ENCODE measurements at regions of chr3 and their contacts with region 1.

Region 1: DNA sequence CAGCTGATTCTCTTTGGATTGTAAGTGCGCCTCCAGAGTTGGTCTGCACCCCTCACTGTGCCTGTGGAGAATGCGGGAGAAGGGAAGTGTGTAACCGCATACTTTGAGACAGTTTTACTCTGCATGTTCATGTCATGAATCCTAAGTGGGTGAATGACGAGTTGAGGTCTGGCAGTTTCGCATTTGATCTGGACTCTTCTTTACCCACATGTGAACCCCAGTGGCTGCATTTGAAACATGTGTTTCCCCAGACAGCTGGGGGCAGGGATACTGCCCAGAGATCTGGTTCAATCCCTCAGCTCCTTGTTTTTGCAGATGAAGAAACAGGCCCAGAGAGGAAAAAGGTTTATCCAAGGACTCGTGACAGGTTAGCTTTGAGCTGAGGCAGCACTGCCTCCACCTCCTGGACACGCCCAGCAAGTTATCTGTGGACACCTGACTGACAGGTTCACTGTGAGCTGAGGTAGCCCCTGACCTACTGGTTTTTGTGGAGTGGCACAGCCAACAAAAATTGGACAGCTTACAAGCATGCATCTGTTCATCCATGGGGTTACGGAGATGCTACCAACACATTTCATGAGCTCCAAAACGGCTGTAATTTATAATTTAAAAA is 207.3 kb downstream of the XXYLT1 start:
- DNase-seq: no peak
- ATAC-seq: no peak

Region 2: GRCh38 chr3:195080571-195081151 is 17.0 kb after region 1 on chr3:
- intact Hi-C with region 1: loop called (anchors 2 kb)
- DNase-seq: no peak
- ATAC-seq: peak; percentile 84

Region 3: GRCh38 chr3:195095035-195095703 is 31.5 kb after region 1 on chr3:
- intact Hi-C with region 1: loop called (anchors 5 kb)
- DNase-seq: no peak
- ATAC-seq: no peak

Measured in Right ventricle myocardium inferior (tissue), 1 donor.